Gastrocnemius medialis (tissue), 4 donors: ENCODE measurements at regions of chr17 and their contacts with region 1.

Region 1: GRCh38 chr17:57833179-57833939 is 16.5 kb downstream of the MRPS23 start:
- DNase-seq: peak; percentile 48 to 77
- ATAC-seq: peak; percentile 81 to 82
- H3K4me3 ChIP-seq: peak overlapping the region; percentile 28 to 57 (median 55)
- H3K27ac ChIP-seq: peak overlapping the region; percentile 71 to 92 (median 88)
- H3K4me1 ChIP-seq: peaks cover 37 to 52% of the 10 kb centered on the region in 2 donors
- H3K27me3 ChIP-seq: no peaks in the 10 kb centered on the region
- CTCF ChIP-seq: peak; percentile 86 to 93 (median 90)
- POLR2A ChIP-seq: peak; percentile 18 to 29

Region 2: GRCh38 chr17:57130761-57131461 is 702.4 kb before region 1 on chr17:
- in situ Hi-C with region 1: no loop called
- intact Hi-C with region 1: loop called (anchors 5 kb)
- DNase-seq: peak; percentile 67 to 79
- ATAC-seq: peak; percentile 94 to 98
- H3K4me3 ChIP-seq: peak overlapping the region in 2 of 4 donors; percentile 15 to 25
- H3K27ac ChIP-seq: no peak overlapping the region
- H3K4me1 ChIP-seq: peaks cover under 1 to 2% of the 10 kb centered on the region in 2 donors
- H3K27me3 ChIP-seq: no peaks in the 10 kb centered on the region
- CTCF ChIP-seq: peak; percentile 60 to 95 (median 78)
- POLR2A ChIP-seq: no peak

Region 3: DNA sequence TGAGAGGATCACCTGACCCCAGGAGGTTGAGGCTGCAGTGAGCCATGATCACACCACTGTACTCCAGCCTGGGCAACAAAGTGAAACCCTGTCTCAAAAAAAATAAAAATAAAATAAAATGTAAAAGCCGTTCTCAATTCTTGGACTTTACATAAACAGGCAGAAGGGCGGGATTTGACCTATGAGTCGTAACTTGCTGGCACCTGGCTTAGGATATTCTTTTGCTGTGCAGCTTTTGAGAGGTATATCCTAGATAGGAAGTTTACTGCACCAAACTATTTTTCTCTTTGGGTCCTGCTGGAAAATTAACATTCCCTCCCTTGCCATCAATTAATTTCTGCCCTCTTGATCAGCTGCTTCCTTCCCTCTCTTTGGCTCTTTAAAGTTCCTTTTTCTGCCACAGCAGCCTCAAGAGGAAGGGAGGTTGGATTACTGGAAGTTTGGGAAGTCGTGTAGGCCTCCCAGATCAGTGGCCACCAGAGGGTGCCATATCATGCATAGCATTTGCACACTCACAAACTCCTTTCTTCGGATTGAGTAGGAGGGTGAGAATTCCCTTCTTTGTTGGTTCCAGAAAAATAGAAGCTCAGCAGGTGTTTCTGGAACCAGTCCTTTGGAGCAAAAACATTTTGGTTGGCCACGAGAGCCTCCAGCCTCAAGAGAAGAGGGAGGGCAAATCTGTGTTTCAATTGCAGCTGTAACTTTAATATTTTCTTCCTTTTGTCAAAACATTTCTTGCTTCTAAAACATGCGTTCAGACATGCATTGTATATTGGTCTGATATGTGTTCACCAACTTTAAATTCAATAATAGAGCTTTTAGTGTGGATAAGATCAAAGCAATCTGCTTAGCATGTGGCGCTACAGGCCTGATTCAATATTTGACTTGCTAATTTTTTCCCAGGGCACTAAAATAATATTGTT is 235.6 kb before region 1 on chr17:
- in situ Hi-C with region 1: no loop called
- intact Hi-C with region 1: loop called (anchors 2 kb)
- DNase-seq: peak in 1 of 2 donors; percentile 66
- ATAC-seq: peak; percentile 60 to 85
- H3K4me3 ChIP-seq: no peak overlapping the region
- H3K27ac ChIP-seq: peak overlapping the region; percentile 37 to 65 (median 58)
- H3K4me1 ChIP-seq: peaks cover 18 to 19% of the 10 kb centered on the region in 2 donors
- H3K27me3 ChIP-seq: no peaks in the 10 kb centered on the region
- CTCF ChIP-seq: peak; percentile 66 to 85 (median 74)
- POLR2A ChIP-seq: no peak

Region 4: DNA sequence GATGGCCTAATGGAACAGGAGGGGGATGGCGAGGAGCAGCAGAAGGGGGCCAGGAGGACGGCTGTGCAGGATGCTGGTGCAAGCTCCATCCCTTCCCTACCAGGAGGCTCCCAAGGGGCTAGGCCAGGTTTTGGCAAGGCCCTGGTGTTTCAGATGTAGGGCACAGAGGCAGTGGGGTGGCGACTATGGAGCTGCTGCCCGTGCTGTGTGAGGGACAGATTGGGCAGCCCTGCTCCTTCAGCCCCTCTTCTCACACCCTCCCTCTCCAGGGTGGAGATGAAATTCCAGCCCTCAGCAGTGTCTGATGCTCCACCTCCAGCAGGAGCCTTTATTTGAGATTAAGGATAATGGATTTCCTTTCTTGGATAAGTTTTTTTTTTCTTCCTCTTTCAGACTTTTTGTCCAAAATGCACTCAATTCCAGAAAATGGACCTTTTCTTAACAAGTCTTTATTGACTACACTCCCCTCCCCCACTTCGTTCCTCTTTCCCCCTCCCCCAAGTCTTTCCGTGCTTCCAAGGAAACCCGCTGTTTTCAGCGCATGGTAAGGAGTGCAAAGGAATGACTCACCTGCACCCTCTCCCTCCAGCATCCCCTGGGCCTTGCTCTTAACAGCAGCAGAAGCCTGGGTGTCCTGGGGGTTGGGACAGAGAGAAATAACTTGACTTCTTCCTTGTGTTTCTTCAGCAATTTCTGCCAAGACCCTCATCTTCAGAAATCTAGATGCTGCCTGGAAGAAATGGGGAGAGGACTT is 183.5 kb before region 1 on chr17:
- in situ Hi-C with region 1: no loop called
- intact Hi-C with region 1: no loop called
- DNase-seq: no peak
- ATAC-seq: no peak
- H3K4me3 ChIP-seq: no peak overlapping the region
- H3K27ac ChIP-seq: no peak overlapping the region
- H3K4me1 ChIP-seq: peaks cover 0 to 5% of the 10 kb centered on the region in 2 donors
- H3K27me3 ChIP-seq: no peaks in the 10 kb centered on the region
- CTCF ChIP-seq: no peak
- POLR2A ChIP-seq: no peak

Region 5: GRCh38 chr17:57662644-57663308 is 170.6 kb before region 1 on chr17:
- in situ Hi-C with region 1: no loop called
- intact Hi-C with region 1: loop called (anchors 5 kb)
- DNase-seq: peak; percentile 86 to 95
- ATAC-seq: peak; percentile 90 to 94
- H3K4me3 ChIP-seq: peak overlapping the region; percentile 15 to 57 (median 37)
- H3K27ac ChIP-seq: peak overlapping the region; percentile 77 to 91 (median 86)
- H3K4me1 ChIP-seq: peaks cover 30 to 35% of the 10 kb centered on the region in 2 donors
- H3K27me3 ChIP-seq: no peaks in the 10 kb centered on the region
- CTCF ChIP-seq: peak in 1 of 5 experiments; percentile 19
- POLR2A ChIP-seq: peak in 1 of 2 donors; percentile 52

Region 6: DNA sequence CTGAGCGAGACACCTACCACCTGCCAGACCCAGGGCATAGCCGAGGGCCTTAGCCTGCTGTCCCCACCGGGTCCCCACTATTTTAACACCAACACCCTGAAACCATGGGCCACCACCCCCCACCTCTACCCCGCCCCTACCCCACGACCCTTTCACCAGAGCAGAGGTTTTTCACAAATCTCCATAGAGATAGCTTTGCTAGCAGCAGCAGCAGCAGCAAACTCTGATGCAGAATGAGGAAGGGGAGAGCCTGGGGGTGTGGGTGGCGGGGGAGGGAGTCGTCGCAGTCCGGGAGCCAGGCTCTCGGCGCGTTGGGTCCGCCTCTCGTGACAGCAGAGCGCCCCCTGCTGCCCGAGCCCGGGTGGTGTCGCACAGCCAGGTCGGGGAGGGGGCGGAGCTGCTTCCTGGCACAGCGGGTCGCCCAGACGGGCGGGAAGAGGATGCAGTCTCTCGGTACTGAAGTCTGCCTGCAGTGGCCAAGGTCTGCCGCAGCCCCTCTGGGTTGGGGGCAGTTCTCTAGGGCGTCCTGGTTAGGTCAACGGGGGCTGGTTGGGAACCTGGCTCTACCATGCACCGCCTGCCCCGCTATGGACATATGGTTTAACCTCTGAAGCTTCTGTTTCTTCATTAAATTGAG is 50.1 kb before region 1 on chr17:
- in situ Hi-C with region 1: no loop called
- intact Hi-C with region 1: loop called (anchors 2 kb)
- DNase-seq: peak; percentile 19 to 40
- ATAC-seq: peak; percentile 35 to 83
- H3K4me3 ChIP-seq: peak overlapping the region; percentile 11 to 39 (median 34)
- H3K27ac ChIP-seq: no peak overlapping the region
- H3K4me1 ChIP-seq: peaks cover 11 to 13% of the 10 kb centered on the region in 2 donors
- H3K27me3 ChIP-seq: no peaks in the 10 kb centered on the region
- CTCF ChIP-seq: peak; percentile 47 to 83 (median 75)
- POLR2A ChIP-seq: no peak

Region 7: DNA sequence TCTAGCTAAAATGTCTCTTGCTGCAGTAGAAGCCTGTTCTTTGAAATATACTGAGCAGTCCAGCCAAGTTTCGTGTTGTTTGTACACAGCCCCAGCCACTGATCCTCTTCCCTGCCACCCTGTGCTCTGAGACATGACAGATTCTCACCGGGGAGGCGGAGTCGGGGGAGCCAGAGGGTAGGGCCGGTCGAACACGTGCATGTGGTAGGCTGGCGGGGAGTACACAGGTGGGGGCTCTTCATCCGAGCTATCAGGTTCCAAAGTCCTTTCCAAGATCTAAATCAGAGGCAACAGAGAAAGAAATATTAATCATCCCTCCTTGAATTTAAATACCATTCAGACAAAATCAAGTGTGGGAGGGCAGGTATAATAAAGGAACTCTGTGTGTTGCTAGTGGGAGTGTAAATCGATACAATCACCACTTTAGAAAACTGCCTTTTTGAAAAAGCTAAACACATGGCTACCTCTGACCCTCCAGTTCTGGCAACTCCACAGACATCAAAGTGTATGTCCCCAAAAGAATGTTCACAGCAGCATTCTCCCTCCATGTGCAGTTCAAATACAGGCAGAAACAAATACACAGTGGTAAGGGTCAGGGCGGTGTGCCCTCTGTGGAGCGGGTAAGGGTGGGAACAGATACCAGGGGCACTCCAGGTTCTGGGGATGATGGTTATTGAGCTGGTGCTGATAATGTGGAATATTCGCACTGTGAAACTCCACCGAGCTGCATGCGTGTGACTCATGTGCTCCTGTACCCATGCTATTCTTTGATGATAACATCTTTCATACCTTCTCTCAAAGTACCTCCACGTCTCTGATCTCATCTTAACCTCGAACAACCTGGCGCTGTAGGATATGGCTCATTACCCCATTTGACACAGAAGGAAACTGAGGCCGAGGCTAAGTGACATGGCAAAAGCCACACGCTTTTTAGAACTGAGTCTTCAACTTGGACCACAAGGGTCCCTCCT is 46.4 kb after region 1 on chr17:
- in situ Hi-C with region 1: no loop called
- intact Hi-C with region 1: no loop called
- DNase-seq: peak; percentile 77 to 83
- ATAC-seq: peak; percentile 64 to 71
- H3K4me3 ChIP-seq: no peak overlapping the region
- H3K27ac ChIP-seq: peak overlapping the region; percentile 79 to 89 (median 83)
- H3K4me1 ChIP-seq: peaks cover 62 to 75% of the 10 kb centered on the region in 2 donors
- H3K27me3 ChIP-seq: no peaks in the 10 kb centered on the region
- CTCF ChIP-seq: no peak
- POLR2A ChIP-seq: no peak

Region 8: GRCh38 chr17:57911834-57912673 is 78.7 kb after region 1 on chr17:
- in situ Hi-C with region 1: no loop called
- intact Hi-C with region 1: no loop called
- DNase-seq: peak; percentile 56 to 81
- ATAC-seq: peak; percentile 74 to 84
- H3K4me3 ChIP-seq: no peak overlapping the region
- H3K27ac ChIP-seq: peak overlapping the region; percentile 35 to 62 (median 57)
- H3K4me1 ChIP-seq: peaks cover 56 to 58% of the 10 kb centered on the region in 2 donors
- H3K27me3 ChIP-seq: no peaks in the 10 kb centered on the region
- CTCF ChIP-seq: no peak
- POLR2A ChIP-seq: no peak